ENCODE measurements at regions of chr12 and their contacts with region 1.

Region 1: DNA sequence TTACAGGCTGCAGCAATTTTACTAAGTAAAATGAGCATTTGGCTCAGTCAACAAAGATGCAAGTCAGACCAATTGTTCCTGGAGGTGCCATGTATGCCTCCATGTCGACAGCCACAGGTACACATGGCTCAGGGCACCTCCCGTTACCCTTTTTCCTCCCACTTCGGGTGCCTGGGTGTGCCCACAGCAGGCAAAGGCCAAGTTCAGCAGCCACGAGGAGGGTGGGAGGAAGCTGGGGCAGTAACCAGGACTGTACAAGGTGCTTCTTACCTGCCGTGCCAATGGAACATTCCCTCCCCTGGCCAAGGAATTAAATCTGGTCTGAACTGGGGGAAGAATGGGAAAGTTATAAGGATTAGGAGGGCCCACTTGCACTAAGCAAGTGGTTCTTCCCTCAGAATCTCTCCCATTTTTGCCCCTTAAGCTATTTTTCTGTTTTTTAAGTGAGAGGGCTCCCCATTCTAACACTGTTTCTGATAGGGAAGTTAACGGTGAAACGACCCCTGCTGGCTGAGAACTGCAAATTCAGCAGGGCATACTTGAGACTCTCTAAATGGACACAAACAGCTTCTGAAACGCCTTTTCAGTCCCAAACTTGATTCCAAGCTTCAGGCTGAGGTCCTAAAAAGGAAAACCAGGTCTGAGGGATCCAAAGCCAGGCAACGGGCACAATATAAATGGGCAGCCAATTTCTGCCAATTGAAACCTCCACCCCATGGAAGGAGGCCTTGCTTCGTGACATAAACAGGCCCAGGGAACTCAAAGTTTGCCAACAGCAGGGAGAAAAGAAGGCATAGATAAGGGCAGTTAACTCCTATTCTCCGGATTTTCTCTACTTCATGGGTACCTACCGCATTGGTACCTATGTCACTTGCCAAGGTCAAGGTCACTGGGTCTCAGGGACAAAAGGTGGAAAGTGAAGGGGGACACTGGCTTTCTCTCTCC is 24.8 kb downstream of the CLECL1 start:
- DNase-seq: peak; percentile 37 to 58
- ATAC-seq: peak; percentile 73

Region 2: GRCh38 chr12:9634177-9634803 is 73.8 kb before region 1 on chr12:
- intact Hi-C with region 1: loop called in 1 of 2 experiments (anchors 10 kb)
- DNase-seq: peak in 1 of 2 donors; percentile 75
- ATAC-seq: peak; percentile 48

Region 3: DNA sequence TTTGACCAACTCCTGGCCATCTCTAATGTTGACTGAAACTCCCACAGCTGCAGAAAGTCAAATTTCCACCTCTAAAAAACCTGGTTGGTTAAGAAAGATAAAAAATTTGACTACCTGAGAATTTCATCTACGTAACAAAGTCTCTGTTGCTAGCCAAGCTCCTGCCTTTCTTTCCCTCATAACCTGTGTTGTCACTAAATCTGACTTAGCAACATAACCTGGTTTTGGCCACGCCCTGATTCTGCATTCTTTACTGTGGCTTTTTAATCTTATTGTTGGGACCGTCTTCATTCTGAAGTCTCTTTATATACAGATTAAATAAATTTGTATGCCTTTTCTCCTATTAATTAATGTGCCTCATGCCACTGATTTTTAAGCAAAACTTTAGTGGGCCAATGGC is 68.6 kb after region 1 on chr12:
- intact Hi-C with region 1: no loop called
- DNase-seq: no peak
- ATAC-seq: no peak

Measured in left colon (tissue), 2 donors.